ENCODE measurements at regions of chr20 and their contacts with region 1.

Region 1: GRCh38 chr20:8853805-8854338 is 215.0 kb upstream of the PLCB4 start:
- DNase-seq: peak in 25 of 42 donors; percentile 12 to 77 (median 38)

Region 2: DNA sequence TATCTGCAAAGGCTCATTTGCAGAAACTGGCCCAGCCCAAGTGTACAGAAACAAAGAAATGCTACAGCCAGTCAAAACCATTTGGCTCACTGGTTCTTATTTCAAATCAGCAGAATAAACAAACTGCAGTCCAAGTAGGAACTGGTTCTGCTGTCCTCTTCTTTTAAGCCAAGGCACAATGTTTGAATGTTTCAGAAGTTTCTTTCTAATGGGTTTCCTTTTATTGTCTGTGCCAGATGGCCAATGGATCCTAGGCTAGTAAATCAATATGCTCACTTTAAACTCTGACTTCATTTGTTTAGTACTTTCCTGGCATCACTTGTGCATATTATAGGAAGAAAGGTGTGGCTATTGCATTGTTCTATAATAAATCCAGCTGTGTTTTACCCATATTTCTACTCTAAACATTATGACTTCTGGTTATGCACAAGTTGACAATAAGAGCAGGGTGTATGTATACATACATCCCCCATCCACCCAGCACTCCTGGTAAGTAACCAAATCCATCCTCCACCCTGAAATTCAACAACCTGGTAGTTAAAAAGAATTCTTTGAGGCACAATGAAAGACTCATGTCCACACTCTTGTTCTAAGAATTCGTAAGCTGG is 115.3 kb after region 1 on chr20:
- intact Hi-C with region 1: no loop called
- DNase-seq: no peak

Region 3: GRCh38 chr20:9359561-9360308 is 505.9 kb after region 1 on chr20:
- intact Hi-C with region 1: loop called (anchors 10 kb)
- DNase-seq: peak in 30 of 42 donors; percentile 10 to 65 (median 38)

Measured in head of caudate nucleus (tissue), 42 donors.